HCT116 (cell line): ENCODE measurements at regions of chr18 and their contacts with region 1.

Region 1: DNA sequence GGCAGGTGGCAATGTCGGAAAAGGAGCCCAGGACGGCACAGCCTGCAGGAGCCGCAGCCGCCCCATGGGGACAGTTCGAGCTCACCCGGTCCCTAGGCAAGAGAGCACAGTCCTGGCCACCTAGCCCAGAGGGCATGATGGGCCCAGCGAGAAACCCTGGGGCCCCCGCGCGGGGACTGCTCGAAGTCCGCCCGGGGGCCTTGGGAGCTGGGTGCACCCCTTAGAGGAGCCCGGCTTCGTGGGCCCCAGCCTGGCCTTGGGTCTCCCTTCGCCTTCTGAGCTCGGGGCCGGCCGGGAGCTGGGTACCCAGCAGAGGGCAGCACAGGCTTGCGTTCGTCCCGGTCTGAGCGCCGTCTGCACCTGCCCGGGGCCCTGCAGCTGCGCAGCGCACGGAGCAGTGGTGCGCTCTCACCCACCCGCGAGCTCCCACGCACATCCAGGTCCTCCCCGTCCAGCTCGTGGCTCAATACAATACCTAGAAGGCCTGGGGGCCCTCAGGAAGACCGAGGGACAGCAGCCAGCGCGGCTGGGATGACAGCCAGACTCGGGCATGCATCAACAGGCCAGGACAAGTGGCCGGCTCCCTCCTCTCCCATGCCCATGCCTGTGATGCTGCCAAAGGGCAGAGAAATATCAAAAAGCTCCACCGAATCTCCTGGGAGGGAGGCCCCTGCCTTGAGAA is 96.2 kb upstream of the ZNF532 start:
- DNase-seq: peak; percentile 23
- ATAC-seq: peak; percentile 91
- H3K4me3 ChIP-seq: no peak overlapping the region
- H3K27ac ChIP-seq: no peak overlapping the region
- H3K4me1 ChIP-seq: peaks cover 2 to 3% of the 10 kb centered on the region in 2 experiments; a peak in 1 of 4 replicates
- H3K27me3 ChIP-seq: no peaks in the 10 kb centered on the region
- CTCF ChIP-seq: peak; percentile 53 to 75 (median 67); a peak in 5 of 6 replicates
- POLR2A ChIP-seq: no peak
- RAD21 ChIP-seq: peak; percentile 81

Region 2: DNA sequence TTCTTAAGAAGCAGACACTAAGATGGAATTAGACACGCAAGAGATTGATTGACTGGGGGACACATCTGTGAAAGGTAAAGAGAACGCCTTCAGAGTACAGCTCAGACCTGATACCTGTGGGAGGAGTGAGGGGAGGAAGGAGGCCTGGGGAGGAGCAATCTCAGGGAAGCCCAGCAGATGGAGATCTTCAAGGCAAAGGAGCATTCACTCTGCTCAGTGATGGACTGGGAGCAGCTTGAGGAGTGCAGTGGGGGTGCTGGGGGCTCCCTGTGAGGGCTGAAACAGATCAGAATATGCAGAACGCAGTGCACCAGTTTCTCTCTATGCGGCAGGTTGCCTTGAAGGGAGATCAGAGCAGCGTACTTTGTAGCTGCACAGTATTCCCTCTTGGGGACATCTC is 861.6 kb before region 1 on chr18:
- CTCF ChIA-PET with region 1: no interaction called
- POLR2A ChIA-PET with region 1: no interaction called
- RAD21 ChIA-PET with region 1: no interaction called
- intact Hi-C with region 1: loop called (anchors 5 kb)
- DNase-seq: no peak
- ATAC-seq: peak; percentile 75
- H3K4me3 ChIP-seq: no peak overlapping the region
- H3K27ac ChIP-seq: no peak overlapping the region
- H3K4me1 ChIP-seq: no peaks in the 10 kb centered on the region
- H3K27me3 ChIP-seq: no peaks in the 10 kb centered on the region
- CTCF ChIP-seq: peak in 2 of 3 experiments; percentile 26 to 36; a peak in 3 of 6 replicates
- POLR2A ChIP-seq: no peak
- RAD21 ChIP-seq: 0 out of 2 replicates have a peak, but pooled peaks have one; percentile 8

Region 3: GRCh38 chr18:58493516-58494253 is 274.7 kb before region 1 on chr18:
- CTCF ChIA-PET with region 1: interaction called, 24 read pairs
- POLR2A ChIA-PET with region 1: no interaction called
- RAD21 ChIA-PET with region 1: interaction called, 4 read pairs
- intact Hi-C with region 1: loop called (anchors 1 kb)
- DNase-seq: peak; percentile 56
- ATAC-seq: peak; percentile 94
- H3K4me3 ChIP-seq: no peak overlapping the region
- H3K27ac ChIP-seq: no peak overlapping the region
- H3K4me1 ChIP-seq: peaks cover 0 to 4% of the 10 kb centered on the region in 2 experiments; a peak in 2 of 4 replicates
- H3K27me3 ChIP-seq: peaks cover 6% of the 10 kb centered on the region; the same call in 1 of the 2 replicates
- CTCF ChIP-seq: peak; percentile 77 to 93 (median 81)
- POLR2A ChIP-seq: no peak
- RAD21 ChIP-seq: peak; percentile 86

Region 4: GRCh38 chr18:58529714-58530354 is 238.6 kb before region 1 on chr18:
- CTCF ChIA-PET with region 1: interaction called, 138 read pairs
- POLR2A ChIA-PET with region 1: interaction called, 5 read pairs
- RAD21 ChIA-PET with region 1: interaction called, 5 to 16 read pairs
- intact Hi-C with region 1: loop called (anchors 1 kb)
- DNase-seq: peak; percentile 35
- ATAC-seq: peak; percentile 93
- H3K4me3 ChIP-seq: no peak overlapping the region
- H3K27ac ChIP-seq: no peak overlapping the region
- H3K4me1 ChIP-seq: no peaks in the 10 kb centered on the region
- H3K27me3 ChIP-seq: no peaks in the 10 kb centered on the region
- CTCF ChIP-seq: peak; percentile 76 to 93 (median 88); a peak in 5 of 6 replicates
- POLR2A ChIP-seq: no peak
- RAD21 ChIP-seq: peak; percentile 96

Region 5: GRCh38 chr18:58754544-58755068 is 13.8 kb before region 1 on chr18:
- CTCF ChIA-PET with region 1: interaction called, 19 read pairs
- POLR2A ChIA-PET with region 1: no interaction called
- RAD21 ChIA-PET with region 1: no interaction called
- intact Hi-C with region 1: no loop called
- DNase-seq: no peak
- ATAC-seq: no peak
- H3K4me3 ChIP-seq: no peak overlapping the region
- H3K27ac ChIP-seq: no peak overlapping the region
- H3K4me1 ChIP-seq: no peaks in the 10 kb centered on the region
- H3K27me3 ChIP-seq: no peaks in the 10 kb centered on the region
- CTCF ChIP-seq: no peak
- POLR2A ChIP-seq: no peak
- RAD21 ChIP-seq: no peak

Region 6: DNA sequence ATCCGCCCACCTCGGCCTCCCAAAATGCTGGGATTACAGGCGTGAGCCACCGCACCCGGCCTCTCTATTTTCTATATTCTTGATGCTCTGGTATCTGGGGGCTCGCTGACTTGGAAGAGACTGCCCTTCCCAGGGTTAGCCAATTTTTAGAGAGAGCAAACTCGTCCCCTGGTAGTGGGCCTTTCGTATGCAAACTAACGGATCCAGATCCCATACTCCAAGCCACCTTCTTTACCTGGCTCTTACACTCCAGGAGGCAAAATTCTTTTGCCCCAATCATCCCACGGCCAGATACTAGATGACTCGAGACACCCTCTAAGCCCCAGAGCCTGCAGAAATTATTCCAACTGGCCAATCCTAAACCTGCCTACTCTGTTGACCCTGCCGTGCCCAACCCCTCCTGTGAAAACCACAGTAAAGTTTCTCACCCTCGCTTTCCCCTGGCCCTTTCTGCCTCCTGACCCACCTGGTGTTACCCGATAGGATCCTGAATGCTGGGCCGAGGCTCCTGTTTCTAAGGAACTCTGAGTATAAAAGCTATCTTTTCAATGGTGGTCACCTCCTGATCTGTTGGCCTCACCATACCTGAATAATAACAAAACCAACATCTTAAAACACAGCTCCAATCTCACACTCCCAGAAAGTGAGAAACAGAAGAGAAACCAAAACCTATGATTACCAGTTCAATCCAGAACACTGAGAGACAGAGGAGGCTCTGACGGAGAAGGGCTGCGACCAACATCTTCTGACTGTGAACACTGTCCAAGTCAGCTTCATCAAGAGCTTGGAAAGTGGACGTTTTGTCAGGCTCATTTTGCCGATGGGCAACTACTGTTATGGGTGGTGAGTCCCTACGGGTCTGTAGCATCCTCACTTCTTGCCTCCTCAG is 38.6 kb after region 1 on chr18:
- CTCF ChIA-PET with region 1: no interaction called
- POLR2A ChIA-PET with region 1: no interaction called
- RAD21 ChIA-PET with region 1: no interaction called
- intact Hi-C with region 1: no loop called
- DNase-seq: no peak
- ATAC-seq: no peak
- H3K4me3 ChIP-seq: no peak overlapping the region
- H3K27ac ChIP-seq: no peak overlapping the region
- H3K4me1 ChIP-seq: no peaks in the 10 kb centered on the region
- H3K27me3 ChIP-seq: peaks cover 2% of the 10 kb centered on the region; the same call in 1 of the 2 replicates
- CTCF ChIP-seq: no peak
- POLR2A ChIP-seq: no peak
- RAD21 ChIP-seq: no peak

Region 7: DNA sequence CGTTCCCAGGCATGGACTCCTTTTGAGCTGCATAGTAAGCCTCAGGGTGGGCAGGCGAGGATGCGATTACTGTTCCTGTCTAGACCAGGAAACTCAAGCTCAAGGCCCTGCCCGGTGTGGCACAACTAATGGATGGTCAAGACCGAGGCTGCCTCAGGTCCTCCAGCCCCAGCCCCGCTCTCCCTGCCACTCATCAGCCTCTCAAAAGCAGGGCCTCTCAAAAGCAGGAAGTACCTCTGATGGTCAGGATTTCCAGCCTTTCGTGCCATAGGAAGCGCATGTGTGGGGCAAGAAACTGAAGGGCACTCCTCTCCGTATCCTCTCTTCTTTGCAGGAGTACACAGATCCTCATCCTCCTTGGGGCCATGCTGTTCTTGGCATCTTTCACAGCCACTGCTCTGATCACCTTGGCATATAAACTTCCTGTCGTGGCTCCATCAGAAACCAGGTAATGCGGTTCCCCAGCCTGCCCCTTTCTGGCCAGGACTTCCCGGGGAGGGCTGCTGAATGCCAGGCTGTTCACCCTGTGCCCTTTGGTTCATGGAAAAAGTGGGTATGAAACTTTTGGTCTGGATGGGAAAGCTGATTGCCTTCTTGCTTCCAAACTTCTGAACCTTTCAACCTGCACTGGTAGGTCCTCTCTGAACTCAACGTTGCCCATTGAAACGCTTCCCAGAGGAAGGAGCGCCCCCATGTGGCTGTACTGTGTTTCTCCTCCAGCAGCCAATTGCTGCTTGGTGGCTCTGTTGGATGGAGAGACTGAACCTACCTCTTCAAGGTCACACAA is 288.5 kb after region 1 on chr18:
- CTCF ChIA-PET with region 1: interaction called, 10 read pairs
- POLR2A ChIA-PET with region 1: no interaction called
- RAD21 ChIA-PET with region 1: no interaction called
- intact Hi-C with region 1: loop called (anchors 1 kb)
- DNase-seq: peak; percentile 51
- ATAC-seq: peak; percentile 89
- H3K4me3 ChIP-seq: no peak overlapping the region
- H3K27ac ChIP-seq: no peak overlapping the region
- H3K4me1 ChIP-seq: no peaks in the 10 kb centered on the region
- H3K27me3 ChIP-seq: peaks cover 38% of the 10 kb centered on the region
- CTCF ChIP-seq: peak; percentile 87 to 96 (median 93)
- POLR2A ChIP-seq: no peak
- RAD21 ChIP-seq: peak; percentile 97

Region 8: DNA sequence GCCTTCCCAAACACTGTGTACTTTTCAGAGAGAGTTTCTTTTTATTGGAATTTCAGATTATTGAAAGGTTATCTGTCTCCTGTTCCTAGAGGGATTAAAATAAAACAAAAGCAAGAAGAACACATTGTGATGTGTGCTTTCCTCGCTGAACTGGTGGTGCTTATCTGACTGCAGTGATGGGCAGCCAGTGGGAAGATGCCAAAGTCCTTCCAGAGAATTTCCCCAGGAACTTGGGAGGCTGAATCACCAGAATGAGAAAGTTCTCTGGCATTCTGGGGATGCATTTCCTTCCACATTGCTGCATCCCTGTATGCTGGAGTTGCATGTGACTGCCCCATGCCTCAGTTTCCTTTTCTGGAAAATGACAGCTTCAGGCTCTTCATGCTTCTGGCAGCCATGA is 317.4 kb after region 1 on chr18:
- CTCF ChIA-PET with region 1: interaction called, 10 read pairs
- POLR2A ChIA-PET with region 1: no interaction called
- RAD21 ChIA-PET with region 1: no interaction called
- intact Hi-C with region 1: no loop called
- DNase-seq: no peak
- ATAC-seq: no peak
- H3K4me3 ChIP-seq: no peak overlapping the region
- H3K27ac ChIP-seq: no peak overlapping the region
- H3K4me1 ChIP-seq: no peaks in the 10 kb centered on the region
- H3K27me3 ChIP-seq: peaks cover 4% of the 10 kb centered on the region
- CTCF ChIP-seq: no peak
- POLR2A ChIP-seq: no peak
- RAD21 ChIP-seq: no peak